GM12878 (cell line): ENCODE measurements at regions of chr11 and their contacts with region 1.

Region 1: GRCh38 chr11:46889689-46890475 is 28.5 kb downstream of the LRP4 start:
- DNase-seq: peak; percentile 32
- ATAC-seq: peak; percentile 95
- H3K4me3 ChIP-seq: no peak overlapping the region
- H3K27ac ChIP-seq: no peak overlapping the region
- H3K4me1 ChIP-seq: no peaks in the 10 kb centered on the region
- H3K27me3 ChIP-seq: no peaks in the 10 kb centered on the region; a peak in 1 of 4 replicates
- CTCF ChIP-seq: peak; percentile 88 to 95 (median 92); a peak in 5 of 6 replicates
- EP300 ChIP-seq: no peak
- POLR2A ChIP-seq: no peak
- RAD21 ChIP-seq: peak; percentile 100

Region 2: DNA sequence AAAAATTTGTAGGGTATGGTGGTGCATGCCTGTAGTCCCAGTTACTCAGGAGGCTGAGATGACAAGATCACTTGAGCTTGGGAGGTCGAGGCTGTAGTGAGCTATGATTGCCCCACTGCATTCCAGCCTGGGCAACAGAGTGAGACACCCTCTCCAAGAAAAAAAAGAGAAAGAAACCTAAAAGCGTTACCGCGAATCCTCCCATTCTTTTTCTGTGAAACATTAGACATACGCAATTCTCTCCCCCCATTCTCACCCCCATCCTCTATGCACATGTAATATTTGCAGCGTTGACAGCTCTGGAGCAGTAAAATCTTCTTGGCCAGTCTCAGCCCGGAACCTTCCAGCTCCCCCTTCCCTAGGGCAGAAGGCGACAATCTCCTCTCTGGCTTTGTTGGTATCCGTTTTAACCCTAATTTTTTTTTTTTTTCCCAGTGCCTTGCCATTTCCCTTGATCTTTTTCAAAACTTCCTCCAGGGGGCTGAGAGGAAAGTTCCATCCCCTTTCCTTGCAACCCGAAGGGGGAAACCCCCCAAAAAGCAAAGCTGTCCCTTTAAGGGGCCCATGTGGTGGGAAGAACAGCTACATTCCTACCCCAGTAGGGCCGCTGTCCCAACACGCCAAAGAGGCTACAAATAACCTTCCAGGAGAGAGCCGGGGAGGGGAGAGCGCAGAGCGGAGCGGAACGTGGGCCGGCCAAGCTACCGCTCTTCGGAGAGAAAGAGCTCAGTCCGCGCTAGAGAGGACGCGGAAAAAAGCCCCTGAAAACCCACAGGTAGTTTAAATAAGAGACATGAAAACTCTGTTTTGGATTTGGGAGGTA is 26.6 kb after region 1 on chr11:
- CTCF ChIA-PET with region 1: interaction called, 4 read pairs
- POLR2A ChIA-PET with region 1: interaction called, 3 read pairs
- RAD21 ChIA-PET with region 1: interaction called, 5 read pairs
- SMC1A ChIA-PET with region 1: no interaction called
- in situ Hi-C with region 1: no loop called
- intact Hi-C with region 1: loop called (anchors 1 kb)
- DNase-seq: no peak
- ATAC-seq: peak; percentile 32; the same call in 2 of the 3 replicates
- H3K4me3 ChIP-seq: peak overlapping the region; percentile 40; the same call in 1 of the 2 replicates
- H3K27ac ChIP-seq: no peak overlapping the region
- H3K4me1 ChIP-seq: peaks cover 6% of the 10 kb centered on the region; the same call in 1 of the 2 replicates
- H3K27me3 ChIP-seq: peaks cover 6 to 28% of the 10 kb centered on the region in 2 experiments
- CTCF ChIP-seq: 0 out of 6 replicates have a peak, but pooled peaks of 1 of the 3 experiments have one; percentile 1
- EP300 ChIP-seq: no peak
- POLR2A ChIP-seq: no peak
- RAD21 ChIP-seq: no peak

Region 3: DNA sequence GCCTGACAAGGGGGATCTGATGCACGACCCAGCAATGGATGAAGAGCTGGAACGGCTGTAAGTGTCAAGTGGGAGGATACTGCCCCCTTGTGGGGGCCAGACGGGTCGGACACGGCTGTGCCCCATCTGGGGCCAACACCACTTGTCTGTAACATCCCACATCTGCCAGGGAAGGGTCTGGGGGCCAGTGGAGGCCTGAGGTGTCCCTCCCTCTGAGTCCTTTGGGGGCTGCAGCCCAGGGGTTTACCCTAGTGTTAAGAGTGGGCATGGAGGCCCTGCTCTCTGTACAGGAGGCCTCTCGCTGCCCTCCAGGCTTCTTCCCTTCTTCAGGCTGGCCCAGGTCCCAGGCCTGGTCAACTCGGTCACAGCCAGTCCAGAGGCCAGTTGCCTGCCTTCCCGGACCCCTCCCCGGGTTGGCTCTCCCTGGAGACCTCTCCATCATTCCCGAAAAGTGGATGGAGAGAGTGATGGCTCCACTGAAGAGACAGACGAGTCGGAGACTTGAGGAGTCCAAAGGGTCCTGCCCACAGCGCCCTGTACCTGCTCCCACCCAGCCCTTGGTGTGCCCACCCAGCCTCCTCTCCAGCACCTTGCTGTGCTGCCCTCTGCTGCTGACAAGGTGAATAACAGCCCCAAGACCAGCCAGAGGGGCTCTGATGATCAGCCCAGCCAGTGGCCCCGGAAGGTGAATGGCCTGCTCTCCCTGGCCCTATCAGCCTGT is 271.4 kb after region 1 on chr11:
- CTCF ChIA-PET with region 1: interaction called, 4 read pairs
- POLR2A ChIA-PET with region 1: no interaction called
- RAD21 ChIA-PET with region 1: interaction called, 3 read pairs
- SMC1A ChIA-PET with region 1: no interaction called
- in situ Hi-C with region 1: loop called (anchors 5 kb)
- intact Hi-C with region 1: loop called (anchors 1 kb)
- DNase-seq: no peak
- ATAC-seq: peak; percentile 94
- H3K4me3 ChIP-seq: no peak overlapping the region
- H3K27ac ChIP-seq: no peak overlapping the region
- H3K4me1 ChIP-seq: no peaks in the 10 kb centered on the region
- H3K27me3 ChIP-seq: no peaks in the 10 kb centered on the region
- CTCF ChIP-seq: peak; percentile 72 to 81 (median 77)
- EP300 ChIP-seq: no peak
- POLR2A ChIP-seq: peak; percentile 51
- RAD21 ChIP-seq: peak; percentile 78

Region 4: GRCh38 chr11:47454180-47454644 is 564.3 kb after region 1 on chr11:
- CTCF ChIA-PET with region 1: no interaction called
- POLR2A ChIA-PET with region 1: no interaction called
- RAD21 ChIA-PET with region 1: no interaction called
- SMC1A ChIA-PET with region 1: no interaction called
- in situ Hi-C with region 1: no loop called
- intact Hi-C with region 1: loop called (anchors 10 kb)
- DNase-seq: peak; percentile 37
- ATAC-seq: peak; percentile 97
- H3K4me3 ChIP-seq: no peak overlapping the region
- H3K27ac ChIP-seq: no peak overlapping the region
- H3K4me1 ChIP-seq: no peaks in the 10 kb centered on the region
- H3K27me3 ChIP-seq: no peaks in the 10 kb centered on the region
- CTCF ChIP-seq: peak; percentile 80 to 87 (median 83)
- EP300 ChIP-seq: no peak
- POLR2A ChIP-seq: no peak
- RAD21 ChIP-seq: peak; percentile 81